GM10248 (cell line): ENCODE measurements at regions of chr7 and their contacts with region 1.

Region 1: GRCh38 chr7:143240291-143241168 is 18.7 kb downstream of the TAS2R40 start:
- DNase-seq: peak; percentile 54
- CTCF ChIP-seq: peak; percentile 77

Region 2: DNA sequence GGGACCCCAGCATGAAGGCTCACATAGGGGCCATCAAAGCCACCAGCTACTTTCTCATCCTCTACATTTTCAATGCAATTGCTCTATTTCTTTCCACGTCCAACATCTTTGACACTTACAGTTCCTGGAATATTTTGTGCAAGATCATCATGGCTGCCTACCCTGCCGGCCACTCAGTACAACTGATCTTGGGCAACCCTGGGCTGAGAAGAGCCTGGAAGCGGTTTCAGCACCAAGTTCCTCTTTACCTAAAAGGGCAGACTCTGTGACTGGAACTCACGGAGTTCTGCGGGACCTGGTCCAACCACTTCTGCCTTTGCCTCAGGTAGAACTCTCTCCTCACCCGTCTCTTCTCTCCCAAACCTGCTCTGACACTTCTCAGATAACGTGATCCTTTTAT is 17.7 kb before region 1 on chr7:
- CTCF ChIA-PET with region 1: interaction called, 17 read pairs
- POLR2A ChIA-PET with region 1: no interaction called
- DNase-seq: no peak
- CTCF ChIP-seq: no peak

Region 3: DNA sequence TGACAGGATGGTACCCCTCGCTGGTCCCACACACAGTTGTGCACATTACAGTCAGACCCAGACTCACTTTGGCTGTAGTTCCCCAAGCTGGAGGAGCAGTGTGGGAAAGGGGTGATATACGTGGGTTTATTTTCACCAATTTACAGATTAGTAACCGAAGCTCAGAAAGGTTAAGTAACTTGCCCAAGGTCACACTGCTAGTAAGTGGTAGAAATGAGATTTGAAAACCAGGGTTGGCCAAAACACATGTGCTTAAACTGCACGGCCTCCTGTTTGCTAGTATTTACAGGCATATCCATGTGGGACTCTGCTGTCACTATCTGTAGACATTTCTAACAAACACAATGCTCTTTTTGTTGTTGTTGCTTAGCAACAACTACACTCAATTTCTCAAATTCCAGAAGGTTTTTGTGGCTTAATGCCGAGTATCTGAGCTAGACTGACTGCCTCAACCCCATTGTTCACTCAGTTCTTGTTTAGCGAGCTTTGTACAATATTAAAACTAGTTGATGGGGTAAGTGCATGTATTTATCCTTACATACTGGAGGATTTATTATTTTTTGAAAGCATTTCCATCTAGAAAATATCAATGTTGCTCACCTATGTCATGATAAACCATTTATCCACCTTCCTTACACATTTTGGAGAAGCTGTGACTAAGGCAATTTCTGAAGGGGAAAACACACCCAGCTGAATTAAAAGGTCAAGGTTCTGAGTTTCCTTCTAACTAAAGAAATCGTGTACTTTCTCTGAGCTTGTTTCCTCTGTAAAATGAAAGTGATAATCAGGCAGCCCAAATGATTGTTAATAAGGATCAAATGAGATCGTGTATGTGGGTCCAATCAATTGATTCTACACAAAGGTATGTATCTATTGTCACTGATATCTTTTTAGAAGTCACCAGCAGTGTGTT is 38.9 kb after region 1 on chr7:
- CTCF ChIA-PET with region 1: interaction called, 13 read pairs
- POLR2A ChIA-PET with region 1: no interaction called
- DNase-seq: no peak
- CTCF ChIP-seq: no peak

Region 4: GRCh38 chr7:143299840-143300239 is 59.3 kb after region 1 on chr7:
- CTCF ChIA-PET with region 1: interaction called, 33 read pairs
- POLR2A ChIA-PET with region 1: no interaction called
- DNase-seq: no peak
- CTCF ChIP-seq: peak; percentile 29

Region 5: GRCh38 chr7:143334244-143334643 is 93.7 kb after region 1 on chr7:
- CTCF ChIA-PET with region 1: interaction called, 17 read pairs
- POLR2A ChIA-PET with region 1: no interaction called
- DNase-seq: no peak
- CTCF ChIP-seq: no peak

Region 6: DNA sequence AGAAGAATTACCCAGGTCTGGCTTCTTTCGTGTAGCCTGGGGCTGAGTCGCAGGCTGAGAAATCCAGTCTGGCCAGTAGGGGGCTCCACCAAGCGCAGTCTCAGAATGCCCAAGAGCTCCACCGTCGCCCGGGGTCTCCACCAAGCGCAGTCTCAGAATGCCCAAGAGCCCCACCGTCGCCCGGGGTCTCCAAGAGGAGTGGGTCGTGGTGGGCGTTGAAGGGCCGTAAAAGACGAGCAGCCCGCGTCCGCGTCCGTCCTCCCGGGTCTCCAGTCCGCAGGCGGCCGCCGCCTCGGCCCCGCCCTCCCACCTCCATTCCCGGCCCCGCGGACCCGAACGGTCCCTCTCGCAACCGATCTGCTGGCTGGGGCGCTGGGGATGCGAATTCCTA is 139.7 kb after region 1 on chr7:
- CTCF ChIA-PET with region 1: interaction called, 13 read pairs
- POLR2A ChIA-PET with region 1: no interaction called
- DNase-seq: peak; percentile 82
- CTCF ChIP-seq: peak; percentile 89

Region 7: GRCh38 chr7:143416565-143417149 is 176.1 kb after region 1 on chr7:
- CTCF ChIA-PET with region 1: interaction called, 57 read pairs
- POLR2A ChIA-PET with region 1: no interaction called
- DNase-seq: peak; percentile 66
- CTCF ChIP-seq: peak; percentile 67